AG04450 (cell line): ENCODE measurements at regions of chr22 and their contacts with region 1.

Region 1: DNA sequence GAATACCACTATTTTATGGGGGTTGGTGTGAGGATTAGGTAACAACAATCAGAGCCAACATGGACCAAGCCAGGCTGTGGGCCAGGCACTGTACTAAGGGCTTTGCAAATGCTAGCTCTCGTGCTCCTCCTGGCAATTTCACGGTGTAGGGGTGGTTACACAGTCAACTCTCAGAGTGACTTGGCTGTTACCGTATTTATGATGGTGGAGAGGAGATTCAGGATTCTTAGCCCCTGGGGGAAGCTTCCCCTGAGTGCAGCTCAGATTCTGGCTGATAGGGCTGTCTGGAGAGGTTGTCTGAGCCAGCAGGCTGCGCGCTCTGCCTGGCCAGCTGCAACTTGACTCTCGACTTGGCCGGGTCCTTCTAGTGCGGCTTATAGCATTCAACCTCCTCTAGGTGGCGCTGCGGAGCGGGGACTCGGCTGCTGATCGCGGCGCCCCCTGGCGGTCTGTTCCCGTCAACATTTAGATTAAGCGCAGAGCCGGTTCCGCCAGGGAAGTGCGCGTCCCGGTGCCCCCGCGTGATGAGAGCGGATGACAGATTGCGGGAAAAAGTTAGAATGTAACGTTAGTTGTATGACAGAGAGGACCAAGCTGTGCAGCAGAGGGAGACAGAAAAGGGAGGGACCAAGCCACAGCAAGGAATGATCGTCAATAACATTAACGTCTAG is 4.5 kb upstream of the NCF4 start:
- DNase-seq: peak; percentile 68
- H3K4me3 ChIP-seq: no peak overlapping the region
- H3K27ac ChIP-seq: no peak overlapping the region
- H3K27me3 ChIP-seq: peaks cover 13% of the 10 kb centered on the region
- CTCF ChIP-seq: peak; percentile 100

Region 2: GRCh38 chr22:36546092-36546804 is 310.0 kb before region 1 on chr22:
- CTCF ChIA-PET with region 1: interaction called, 140 read pairs
- POLR2A ChIA-PET with region 1: no interaction called
- DNase-seq: no peak
- H3K4me3 ChIP-seq: no peak overlapping the region
- H3K27ac ChIP-seq: no peak overlapping the region
- H3K27me3 ChIP-seq: peaks cover 10% of the 10 kb centered on the region
- CTCF ChIP-seq: peak; percentile 58

Region 3: GRCh38 chr22:36641902-36642640 is 214.2 kb before region 1 on chr22:
- CTCF ChIA-PET with region 1: no interaction called
- POLR2A ChIA-PET with region 1: no interaction called
- DNase-seq: no peak
- H3K4me3 ChIP-seq: no peak overlapping the region
- H3K27ac ChIP-seq: no peak overlapping the region
- H3K27me3 ChIP-seq: peaks cover 22% of the 10 kb centered on the region
- CTCF ChIP-seq: no peak

Region 4: GRCh38 chr22:36762687-36763260 is 93.5 kb before region 1 on chr22:
- CTCF ChIA-PET with region 1: interaction called, 28 read pairs
- POLR2A ChIA-PET with region 1: no interaction called
- DNase-seq: peak; percentile 84
- H3K4me3 ChIP-seq: no peak overlapping the region
- H3K27ac ChIP-seq: peak overlapping the region; percentile 57
- H3K27me3 ChIP-seq: no peaks in the 10 kb centered on the region
- CTCF ChIP-seq: no peak

Region 5: DNA sequence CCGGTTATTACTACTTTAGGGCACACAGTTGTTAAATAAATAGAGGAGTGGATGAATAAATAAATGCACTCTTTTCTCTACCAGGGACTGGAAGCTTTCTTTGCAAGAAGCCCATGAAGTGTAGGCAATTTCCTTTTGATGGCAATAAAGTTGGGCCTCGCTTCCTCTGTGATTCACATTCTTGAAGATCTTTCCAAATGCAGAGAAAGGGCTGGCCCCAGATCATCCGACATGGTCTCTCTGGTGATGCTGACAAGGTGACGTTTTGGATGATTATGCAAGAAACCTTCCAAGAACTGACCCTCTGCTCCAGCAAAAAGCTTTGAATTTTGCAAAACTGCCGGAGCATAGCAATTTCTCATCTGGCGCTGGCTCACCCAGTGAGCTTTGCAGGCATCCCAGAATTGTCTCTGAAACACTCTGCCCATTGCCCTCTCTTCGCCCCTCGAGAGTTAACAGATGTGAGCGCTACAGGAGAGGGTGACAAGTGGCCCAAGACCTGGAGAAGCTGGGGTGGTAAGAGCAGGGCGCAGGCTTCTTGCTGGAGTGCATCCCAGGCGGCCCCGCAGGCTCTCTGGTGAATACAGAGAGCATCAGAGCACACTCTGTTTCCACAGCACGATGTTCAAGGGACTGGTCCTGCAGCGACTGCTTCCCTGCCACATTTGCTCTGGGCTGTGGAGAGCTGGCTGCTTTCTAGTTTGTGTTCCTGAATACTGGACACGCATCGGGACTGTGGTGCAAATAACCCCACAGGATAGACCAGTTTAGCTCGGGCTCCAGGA is 68.9 kb before region 1 on chr22:
- CTCF ChIA-PET with region 1: interaction called, 45 read pairs
- POLR2A ChIA-PET with region 1: no interaction called
- DNase-seq: no peak
- H3K4me3 ChIP-seq: no peak overlapping the region
- H3K27ac ChIP-seq: no peak overlapping the region
- H3K27me3 ChIP-seq: peaks cover 51% of the 10 kb centered on the region
- CTCF ChIP-seq: no peak

Region 6: DNA sequence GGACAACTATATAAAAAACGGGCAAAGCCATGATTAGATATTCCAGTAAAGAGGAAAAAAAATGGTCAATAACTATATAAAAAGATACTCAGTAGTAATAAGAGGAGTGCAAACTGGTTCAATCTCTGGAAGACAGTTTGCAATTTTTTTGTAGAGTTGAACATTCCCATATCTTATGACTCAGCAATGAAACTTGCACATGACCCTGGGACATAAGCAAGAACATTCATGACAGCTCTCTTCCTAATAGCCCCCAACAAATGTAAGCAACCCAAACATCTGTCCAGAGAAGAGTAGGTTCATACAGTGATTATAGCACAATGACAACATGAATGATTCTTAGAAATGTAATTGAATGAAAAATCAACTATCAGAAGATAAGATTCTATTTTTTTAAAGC is 35.4 kb after region 1 on chr22:
- CTCF ChIA-PET with region 1: interaction called, 11 read pairs
- POLR2A ChIA-PET with region 1: no interaction called
- DNase-seq: no peak
- H3K4me3 ChIP-seq: no peak overlapping the region
- H3K27ac ChIP-seq: no peak overlapping the region
- H3K27me3 ChIP-seq: peaks cover 17% of the 10 kb centered on the region
- CTCF ChIP-seq: no peak

Region 7: GRCh38 chr22:37019309-37020125 is 163.3 kb after region 1 on chr22 and contains the starts of genes MPST and TST:
- CTCF ChIA-PET with region 1: interaction called, 10 read pairs
- POLR2A ChIA-PET with region 1: no interaction called
- DNase-seq: no peak
- H3K4me3 ChIP-seq: peak within 1 kb of the TSS; percentile 78
- H3K27ac ChIP-seq: peak within 1 kb of the TSS; percentile 57
- H3K27me3 ChIP-seq: no peaks in the 10 kb centered on the region
- CTCF ChIP-seq: no peak
- polyA plus RNA-seq, gene MPST: 33.3 and 42.8 TPM in 2 replicates
- polyA plus RNA-seq, gene TST: 26.3 and 36.7 TPM in 2 replicates